Natural killer cell (primary cell): ENCODE measurements at regions of chr13 and their contacts with region 1.

Region 1: DNA sequence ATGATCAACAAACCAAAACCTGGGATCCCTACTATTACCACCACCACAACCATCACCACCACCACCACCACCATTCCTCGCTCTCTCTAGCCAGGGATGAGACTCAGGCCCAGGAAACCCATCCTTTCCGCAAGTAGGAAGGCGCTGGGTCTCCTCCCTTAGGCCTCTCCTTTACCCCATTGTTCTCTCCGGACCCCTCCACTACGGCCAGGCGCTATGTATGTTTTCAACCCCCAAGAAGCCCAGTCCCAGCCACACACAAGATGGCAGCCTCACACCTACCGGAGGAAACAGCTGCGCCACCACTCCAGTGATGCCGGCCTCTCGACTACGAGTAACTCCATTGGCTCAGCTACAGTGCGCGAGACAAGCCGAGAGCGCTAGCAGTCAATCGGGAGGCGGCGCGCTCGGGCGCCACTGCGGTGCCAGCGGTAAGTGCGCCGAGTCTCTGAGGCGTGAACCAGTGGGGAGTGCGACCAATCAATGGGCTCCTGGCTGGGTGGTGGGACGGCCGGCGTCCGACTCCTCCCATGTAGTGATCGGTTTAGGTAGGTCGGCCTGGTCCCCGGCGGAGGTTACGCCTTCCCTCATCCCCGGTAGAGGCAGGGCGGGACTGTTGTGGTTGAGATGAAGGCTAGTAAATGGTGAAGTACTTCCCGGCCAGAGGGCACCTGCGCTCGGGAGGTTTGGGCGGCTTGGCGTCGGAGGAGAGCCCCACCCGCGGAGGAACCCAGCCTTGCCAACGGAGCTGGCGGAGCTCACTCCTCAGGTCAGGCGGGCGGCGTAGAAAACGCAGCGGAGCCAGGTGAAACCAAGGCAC is at the starts of genes CAB39L and SETDB2:
- DNase-seq: peak; percentile 98 to 99
- ATAC-seq: peak; percentile 84 to 97 (median 89)
- H3K4me3 ChIP-seq: peak within 1 kb of the TSS; percentile 55
- H3K4me3 Mint-ChIP-seq: peak within 1 kb of the TSS; percentile 98
- H3K27ac ChIP-seq: peak within 1 kb of the TSS; percentile 91
- H3K27ac Mint-ChIP-seq: peak within 1 kb of the TSS; percentile 96 to 97
- H3K4me1 ChIP-seq: peaks cover 17% of the 10 kb centered on the region
- H3K4me1 Mint-ChIP-seq: peaks cover 40 to 44% of the 10 kb centered on the region in 2 donors
- H3K27me3 ChIP-seq: no peaks in the 10 kb centered on the region
- H3K27me3 Mint-ChIP-seq: no peaks in the 10 kb centered on the region
- CTCF ChIP-seq: no peak
- total RNA-seq, gene CAB39L: 4.4 to 6.5 (median 6.0) TPM
- total RNA-seq, gene SETDB2: 15.8 to 17.4 (median 16.4) TPM

Region 2: DNA sequence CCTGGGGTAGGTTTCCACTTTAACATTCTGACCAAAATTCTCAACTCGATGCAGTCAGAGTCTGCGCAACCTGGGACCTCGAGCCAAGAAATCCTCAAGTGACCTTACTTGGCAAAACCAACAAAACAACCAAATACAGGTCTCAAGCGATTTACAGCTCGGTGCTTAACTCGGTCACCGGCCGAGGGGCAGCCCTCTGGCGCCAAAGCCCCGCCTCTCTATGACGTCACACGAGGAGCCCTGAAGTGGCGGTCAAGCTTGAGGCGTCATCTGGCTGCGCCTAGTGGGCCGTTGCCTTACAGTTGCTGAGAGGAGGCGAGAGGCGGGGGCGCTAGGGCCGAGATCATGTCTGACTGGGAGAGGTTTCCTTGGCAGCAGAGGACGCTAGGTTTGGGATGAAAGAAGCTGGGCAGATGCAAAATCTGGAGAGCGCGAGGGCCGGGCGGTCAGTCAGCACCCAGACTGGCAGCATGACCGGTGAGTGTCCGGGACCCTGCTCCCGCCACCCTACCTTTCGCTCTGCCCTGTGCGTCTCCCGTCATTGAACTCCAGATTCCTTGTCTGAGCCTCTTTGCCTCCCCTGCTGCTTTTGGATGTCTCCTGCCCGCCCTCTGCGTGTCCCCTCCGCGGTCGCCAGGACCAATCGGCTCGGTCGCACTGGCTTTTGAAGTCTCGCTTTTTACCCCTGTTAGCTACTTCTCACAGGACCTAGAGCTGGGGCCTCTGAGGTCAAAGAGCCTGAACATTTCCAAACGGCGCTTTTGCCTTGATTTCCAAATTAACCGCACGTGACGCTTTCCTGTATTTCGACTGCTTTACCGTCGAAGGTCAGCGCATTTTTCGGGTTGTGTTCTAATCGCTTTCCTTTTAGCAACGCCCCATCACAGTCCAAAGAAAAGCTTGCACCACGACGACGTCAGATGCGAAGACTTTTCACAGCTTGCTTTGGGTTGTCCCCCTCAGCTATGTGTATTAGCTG is 196.0 kb before region 1 on chr13 and contains the start of gene CDADC1:
- intact Hi-C with region 1: loop called (anchors 2 kb)
- DNase-seq: peak; percentile 91 to 94
- ATAC-seq: peak; percentile 87 to 94 (median 93)
- H3K4me3 ChIP-seq: peak within 1 kb of the TSS; percentile 68
- H3K4me3 Mint-ChIP-seq: peak within 1 kb of the TSS; percentile 99
- H3K27ac ChIP-seq: peak within 1 kb of the TSS; percentile 76
- H3K27ac Mint-ChIP-seq: peak within 1 kb of the TSS; percentile 97 to 99
- H3K4me1 ChIP-seq: peaks cover 13% of the 10 kb centered on the region
- H3K4me1 Mint-ChIP-seq: peaks cover 21 to 28% of the 10 kb centered on the region in 2 donors
- H3K27me3 ChIP-seq: no peaks in the 10 kb centered on the region
- H3K27me3 Mint-ChIP-seq: peaks cover 0 to 5% of the 10 kb centered on the region in 2 donors
- CTCF ChIP-seq: no peak
- total RNA-seq, gene CDADC1: 32.0 to 39.4 (median 33.6) TPM

Region 3: GRCh38 chr13:49495783-49496762 is 52.2 kb after region 1 on chr13 and contains the start of gene PHF11:
- intact Hi-C with region 1: loop called (anchors 1 kb)
- DNase-seq: peak; percentile 83 to 93
- ATAC-seq: peak; percentile 82 to 93 (median 89)
- H3K4me3 ChIP-seq: peak within 1 kb of the TSS; percentile 71
- H3K4me3 Mint-ChIP-seq: peak within 1 kb of the TSS; percentile 97
- H3K27ac ChIP-seq: peak within 1 kb of the TSS; percentile 95
- H3K27ac Mint-ChIP-seq: peak within 1 kb of the TSS; percentile 81 to 97
- H3K4me1 ChIP-seq: peaks cover 20% of the 10 kb centered on the region
- H3K4me1 Mint-ChIP-seq: peaks cover 36 to 39% of the 10 kb centered on the region in 2 donors
- H3K27me3 ChIP-seq: no peaks in the 10 kb centered on the region
- H3K27me3 Mint-ChIP-seq: no peaks in the 10 kb centered on the region
- CTCF ChIP-seq: no peak
- total RNA-seq, gene PHF11: 89.0 to 113 (median 111) TPM

Region 4: DNA sequence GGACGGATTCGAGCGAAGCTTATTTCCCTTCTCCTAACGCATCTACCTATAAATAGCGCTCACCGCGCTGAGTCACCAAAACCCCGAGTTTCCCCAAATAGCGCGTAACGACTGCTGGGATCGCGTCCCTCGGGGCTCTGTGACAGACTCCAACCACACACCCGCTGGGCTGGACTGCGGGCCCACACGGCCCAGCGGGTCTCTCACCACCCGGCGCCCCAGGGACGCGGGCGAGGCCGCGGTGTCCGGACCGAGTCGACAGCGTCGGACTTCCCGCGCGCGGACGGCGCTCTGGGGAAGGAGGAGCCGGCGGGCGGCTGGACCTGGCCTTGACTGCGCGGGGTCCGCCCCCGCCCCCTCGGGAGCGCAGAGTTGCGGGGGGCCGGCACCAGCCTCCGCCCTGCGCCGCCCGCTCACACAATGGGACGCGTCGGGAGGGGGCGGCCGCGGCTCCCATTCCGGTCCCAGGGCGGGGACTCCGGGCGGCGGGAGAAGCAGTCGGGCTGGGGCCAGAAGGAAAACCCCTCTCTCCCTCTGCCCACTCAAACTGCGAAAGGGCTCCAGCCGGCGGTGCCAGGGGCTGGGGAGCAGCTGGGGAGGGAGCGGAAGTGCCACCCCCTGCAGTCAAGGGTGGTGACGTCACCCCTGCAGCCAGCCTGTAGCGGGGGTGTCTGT is 680.1 kb after region 1 on chr13:
- intact Hi-C with region 1: loop called (anchors 10 kb)
- DNase-seq: peak; percentile 82 to 89
- ATAC-seq: peak; percentile 65 to 88 (median 77)
- H3K4me3 ChIP-seq: peak overlapping the region; percentile 60
- H3K4me3 Mint-ChIP-seq: peak overlapping the region; percentile 91
- H3K27ac ChIP-seq: peak overlapping the region; percentile 95
- H3K27ac Mint-ChIP-seq: peak overlapping the region; percentile 93 to 98
- H3K4me1 ChIP-seq: peaks cover 32% of the 10 kb centered on the region
- H3K4me1 Mint-ChIP-seq: peaks cover 39 to 42% of the 10 kb centered on the region in 2 donors
- H3K27me3 ChIP-seq: peaks cover 1% of the 10 kb centered on the region
- H3K27me3 Mint-ChIP-seq: peaks cover 4 to 8% of the 10 kb centered on the region in 2 donors
- CTCF ChIP-seq: no peak